Panc1 (cell line): ENCODE measurements at regions of chr5 and their contacts with region 1.

Region 1: GRCh38 chr5:139197710-139198669 is at the start of gene SIL1:
- DNase-seq: peak; percentile 54
- ATAC-seq: peak; percentile 100
- H3K4me3 ChIP-seq: peak within 1 kb of the TSS; percentile 80 to 97
- H3K27ac ChIP-seq: peak within 1 kb of the TSS; percentile 96
- H3K4me1 ChIP-seq: peaks cover 5% of the 10 kb centered on the region; the same call in 1 of the 2 replicates
- H3K27me3 ChIP-seq: no peaks in the 10 kb centered on the region
- CTCF ChIP-seq: no peak
- total RNA-seq, gene SIL1: 35.4 TPM

Region 2: DNA sequence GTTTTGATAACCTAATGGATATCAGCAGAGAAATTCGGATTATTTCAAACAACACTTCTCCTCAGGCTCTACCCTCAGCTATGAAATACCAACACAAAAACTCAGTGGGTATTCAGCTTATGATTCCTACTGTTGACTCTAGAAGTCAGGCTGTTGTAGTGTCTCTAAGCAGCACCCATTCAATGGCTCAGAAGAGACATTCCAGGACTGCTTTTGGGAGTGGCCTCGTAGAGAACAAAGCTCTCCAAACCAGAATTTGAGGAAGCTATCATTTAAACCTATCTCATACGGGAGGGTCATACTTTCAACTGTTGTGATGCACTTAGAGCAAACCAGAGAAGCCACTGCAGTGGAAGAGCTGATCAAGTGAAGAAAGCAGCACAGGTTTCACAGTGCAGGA is 689.0 kb before region 1 on chr5:
- CTCF ChIA-PET with region 1: interaction called, 10 read pairs
- POLR2A ChIA-PET with region 1: no interaction called
- in situ Hi-C with region 1: no loop called
- intact Hi-C with region 1: no loop called
- DNase-seq: no peak
- ATAC-seq: no peak
- H3K4me3 ChIP-seq: no peak overlapping the region
- H3K27ac ChIP-seq: no peak overlapping the region
- H3K4me1 ChIP-seq: peaks cover 6% of the 10 kb centered on the region; the same call in 1 of the 2 replicates
- H3K27me3 ChIP-seq: no peaks in the 10 kb centered on the region
- CTCF ChIP-seq: no peak

Region 3: GRCh38 chr5:138922494-138922893 is 275.5 kb before region 1 on chr5:
- CTCF ChIA-PET with region 1: no interaction called
- POLR2A ChIA-PET with region 1: no interaction called
- in situ Hi-C with region 1: no loop called
- intact Hi-C with region 1: no loop called
- DNase-seq: no peak
- ATAC-seq: no peak
- H3K4me3 ChIP-seq: no peak overlapping the region
- H3K27ac ChIP-seq: no peak overlapping the region
- H3K4me1 ChIP-seq: no peaks in the 10 kb centered on the region
- H3K27me3 ChIP-seq: no peaks in the 10 kb centered on the region
- CTCF ChIP-seq: no peak

Region 4: DNA sequence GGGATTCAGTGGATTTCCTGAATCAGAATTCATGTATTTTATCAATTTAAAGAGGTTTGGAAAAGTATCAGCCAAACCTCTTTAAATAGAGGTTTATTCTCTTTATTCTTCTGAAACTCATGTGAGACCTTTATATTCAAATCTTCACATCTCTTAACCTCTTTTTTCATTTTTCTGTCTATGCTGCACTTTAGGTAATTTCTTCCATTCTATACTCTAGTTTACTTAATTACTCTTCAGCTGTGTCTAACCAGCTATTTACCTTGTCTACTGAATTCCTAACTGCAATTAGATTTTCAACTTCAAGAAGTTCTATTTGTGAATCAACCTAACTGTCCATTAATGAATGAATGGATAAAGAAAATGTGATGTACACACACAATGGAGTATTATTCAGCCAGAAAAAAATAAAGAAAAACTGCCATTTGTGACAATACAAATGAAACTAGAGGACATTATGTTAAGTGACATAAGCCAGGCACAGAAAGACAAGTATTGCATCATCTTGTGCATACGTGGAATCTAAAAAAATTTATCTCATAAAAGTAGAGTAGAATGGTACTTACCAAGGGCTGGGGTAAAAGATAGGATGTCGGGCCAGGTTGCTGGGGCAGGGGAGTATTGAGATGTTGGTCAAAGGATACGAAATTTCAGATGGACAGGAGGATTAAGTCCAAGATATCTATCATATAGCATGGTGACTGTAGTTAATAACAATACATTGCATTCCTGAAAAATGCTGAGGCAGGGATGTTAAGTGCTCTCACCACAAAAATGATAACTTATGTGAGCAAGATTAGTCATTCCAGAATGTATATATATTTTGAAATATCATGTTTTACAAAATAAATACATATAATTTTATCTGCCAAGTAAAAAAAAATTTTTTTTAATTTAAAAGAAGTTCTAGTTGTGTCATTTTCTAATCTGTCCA is 193.3 kb before region 1 on chr5:
- CTCF ChIA-PET with region 1: no interaction called
- POLR2A ChIA-PET with region 1: no interaction called
- in situ Hi-C with region 1: no loop called
- intact Hi-C with region 1: no loop called
- DNase-seq: no peak
- ATAC-seq: no peak
- H3K4me3 ChIP-seq: no peak overlapping the region
- H3K27ac ChIP-seq: no peak overlapping the region
- H3K4me1 ChIP-seq: no peaks in the 10 kb centered on the region
- H3K27me3 ChIP-seq: no peaks in the 10 kb centered on the region
- CTCF ChIP-seq: no peak

Region 5: GRCh38 chr5:139315056-139315615 is 117.1 kb after region 1 on chr5:
- CTCF ChIA-PET with region 1: no interaction called
- POLR2A ChIA-PET with region 1: no interaction called
- in situ Hi-C with region 1: no loop called
- intact Hi-C with region 1: no loop called
- DNase-seq: no peak
- ATAC-seq: no peak
- H3K4me3 ChIP-seq: no peak overlapping the region
- H3K27ac ChIP-seq: no peak overlapping the region
- H3K4me1 ChIP-seq: peaks cover 35% of the 10 kb centered on the region
- H3K27me3 ChIP-seq: no peaks in the 10 kb centered on the region
- CTCF ChIP-seq: no peak

Region 6: DNA sequence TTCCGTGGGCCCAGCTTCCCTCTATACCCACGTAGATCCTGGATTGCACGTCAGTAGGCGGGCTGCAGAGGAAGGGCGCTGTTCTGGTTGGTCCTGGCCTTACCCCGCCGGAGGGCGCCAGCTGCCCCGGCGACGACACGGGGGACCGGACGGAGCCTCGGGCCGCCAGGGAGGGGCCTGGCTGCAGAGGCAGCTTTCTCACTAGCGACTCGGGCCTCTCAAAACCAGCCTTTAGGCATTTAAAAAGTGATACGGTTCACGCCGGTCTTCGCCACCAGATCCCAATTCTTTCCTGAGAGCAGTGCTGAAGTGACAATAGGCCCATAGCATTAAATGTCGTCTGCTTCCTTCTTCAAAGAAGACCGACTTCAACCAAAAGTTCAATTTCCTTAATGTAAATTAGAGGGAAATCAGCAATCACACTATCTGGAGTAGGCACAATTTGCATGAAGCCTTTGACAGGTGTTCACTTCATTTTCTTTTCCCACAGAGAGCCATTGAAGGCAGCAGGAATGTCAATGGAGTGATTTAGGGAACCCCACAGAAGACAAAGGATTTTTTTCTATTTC is 345.5 kb after region 1 on chr5:
- CTCF ChIA-PET with region 1: no interaction called
- POLR2A ChIA-PET with region 1: no interaction called
- in situ Hi-C with region 1: no loop called
- intact Hi-C with region 1: no loop called
- DNase-seq: no peak
- ATAC-seq: peak; percentile 90
- H3K4me3 ChIP-seq: peak overlapping the region in 1 of 2 experiments; percentile 26; a peak in 1 of 4 replicates
- H3K27ac ChIP-seq: no peak overlapping the region
- H3K4me1 ChIP-seq: no peaks in the 10 kb centered on the region
- H3K27me3 ChIP-seq: no peaks in the 10 kb centered on the region
- CTCF ChIP-seq: no peak